ENCODE measurements at regions of chr16 and their contacts with region 1.

Region 1: GRCh38 chr16:29848420-29849297 is 14.4 kb downstream of the CDIPT start:
- DNase-seq: peak; percentile 87
- ATAC-seq: peak; percentile 95
- H3K4me3 Mint-ChIP-seq: no peak overlapping the region
- H3K27ac Mint-ChIP-seq: no peak overlapping the region
- H3K4me1 Mint-ChIP-seq: peaks cover 6% of the 10 kb centered on the region
- H3K27me3 Mint-ChIP-seq: no peaks in the 10 kb centered on the region

Region 2: DNA sequence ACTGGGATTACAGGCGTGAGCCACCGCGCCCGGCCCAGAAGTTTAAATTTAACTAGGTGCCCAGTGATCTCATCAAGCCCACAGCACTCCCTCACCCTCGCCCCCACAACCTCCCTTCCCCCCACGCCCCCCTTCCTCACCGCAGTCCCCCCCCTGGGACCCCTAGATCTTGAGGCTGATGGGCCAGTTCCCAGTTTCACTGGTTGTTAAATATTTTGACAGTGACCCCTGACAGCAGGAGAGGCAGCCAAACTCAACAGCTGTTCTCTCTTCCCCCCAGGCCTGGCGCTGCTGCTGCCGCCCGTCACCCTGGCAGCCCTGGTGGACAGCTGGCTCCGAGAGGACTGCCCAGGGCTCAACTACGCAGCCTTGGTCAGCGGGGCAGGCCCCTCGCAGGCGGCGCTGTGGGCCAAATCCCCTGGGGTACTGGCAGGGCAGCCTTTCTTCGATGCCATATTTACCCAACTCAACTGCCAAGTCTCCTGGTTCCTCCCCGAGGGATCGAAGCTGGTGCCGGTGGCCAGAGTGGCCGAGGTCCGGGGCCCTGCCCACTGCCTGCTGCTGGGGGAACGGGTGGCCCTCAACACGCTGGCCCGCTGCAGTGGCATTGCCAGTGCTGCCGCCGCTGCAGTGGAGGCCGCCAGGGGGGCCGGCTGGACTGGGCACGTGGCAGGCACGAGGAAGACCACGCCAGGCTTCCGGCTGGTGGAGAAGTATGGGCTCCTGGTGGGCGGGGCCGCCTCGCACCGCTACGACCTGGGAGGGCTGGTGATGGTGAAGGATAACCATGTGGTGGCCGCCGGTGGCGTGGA is 154.1 kb before region 1 on chr16:
- CTCF ChIA-PET with region 1: interaction called, 93 read pairs
- POLR2A ChIA-PET with region 1: no interaction called
- DNase-seq: no peak
- ATAC-seq: no peak
- H3K4me3 Mint-ChIP-seq: no peak overlapping the region
- H3K27ac Mint-ChIP-seq: no peak overlapping the region
- H3K4me1 Mint-ChIP-seq: peaks cover 14% of the 10 kb centered on the region
- H3K27me3 Mint-ChIP-seq: no peaks in the 10 kb centered on the region

Region 3: GRCh38 chr16:29805378-29806098 is 43.1 kb before region 1 on chr16:
- CTCF ChIA-PET with region 1: interaction called, 62 read pairs
- POLR2A ChIA-PET with region 1: interaction called, 9 read pairs
- DNase-seq: peak; percentile 99
- ATAC-seq: peak; percentile 72
- H3K4me3 Mint-ChIP-seq: peak overlapping the region; percentile 89
- H3K27ac Mint-ChIP-seq: peak overlapping the region; percentile 93
- H3K4me1 Mint-ChIP-seq: peaks cover 49% of the 10 kb centered on the region
- H3K27me3 Mint-ChIP-seq: no peaks in the 10 kb centered on the region

Region 4: DNA sequence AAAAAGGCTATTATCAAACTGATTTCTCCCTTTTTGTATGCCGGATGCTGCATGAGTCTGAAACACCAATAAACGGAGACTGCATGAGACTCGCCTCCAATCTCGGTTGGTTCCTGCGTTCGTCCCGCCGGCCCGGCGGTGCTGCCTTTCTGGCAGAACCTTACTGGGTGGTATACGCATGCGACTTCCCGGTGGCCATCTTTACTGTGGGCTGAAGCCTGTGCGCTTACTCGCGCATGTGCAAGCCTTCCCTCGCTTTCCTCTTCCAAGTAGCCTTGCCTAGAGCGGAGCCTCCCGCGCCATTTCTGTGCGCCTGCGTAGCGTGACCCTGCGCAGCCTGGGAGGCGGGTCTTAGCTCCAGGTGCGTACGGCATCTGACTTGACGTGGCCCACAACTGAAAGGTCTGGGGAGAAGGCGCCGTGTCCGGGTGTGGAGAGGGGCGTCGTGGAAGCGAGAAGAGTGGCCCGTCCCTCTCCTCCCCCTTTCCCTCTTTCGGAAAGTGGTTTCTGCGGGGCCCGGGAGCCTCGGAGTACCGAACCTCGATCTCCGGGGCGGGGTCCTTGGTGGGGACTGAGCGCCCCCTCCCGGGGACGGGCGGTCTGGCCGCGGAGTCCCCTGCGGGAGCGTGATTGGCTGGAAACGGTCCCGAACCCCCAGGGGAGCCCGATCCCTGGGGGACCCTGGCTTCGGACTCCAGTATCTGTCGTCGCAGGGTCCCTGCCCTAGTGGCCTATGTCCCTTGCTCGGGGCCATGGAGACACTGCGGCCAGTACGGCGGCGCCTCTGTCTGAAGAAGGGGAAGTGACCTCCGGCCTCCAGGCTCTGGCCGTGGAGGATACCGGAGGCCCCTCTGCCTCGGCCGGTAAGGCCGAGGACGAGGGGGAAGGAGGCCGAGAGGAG is 32.6 kb before region 1 on chr16 and contains the start of gene PAGR1:
- CTCF ChIA-PET with region 1: interaction called, 106 read pairs
- POLR2A ChIA-PET with region 1: interaction called, 12 read pairs
- DNase-seq: peak; percentile 99
- ATAC-seq: peak; percentile 76
- H3K4me3 Mint-ChIP-seq: peak within 1 kb of the TSS; percentile 98
- H3K27ac Mint-ChIP-seq: peak within 1 kb of the TSS; percentile 92
- H3K4me1 Mint-ChIP-seq: peaks cover 70% of the 10 kb centered on the region
- H3K27me3 Mint-ChIP-seq: peaks cover 8% of the 10 kb centered on the region
- total RNA-seq, gene PAGR1: 39.1 TPM

Region 5: GRCh38 chr16:29825145-29826044 is 23.3 kb before region 1 on chr16:
- CTCF ChIA-PET with region 1: interaction called, 106 read pairs
- POLR2A ChIA-PET with region 1: interaction called, 12 read pairs
- DNase-seq: peak; percentile 62
- ATAC-seq: peak; percentile 35
- H3K4me3 Mint-ChIP-seq: peak overlapping the region; percentile 13
- H3K27ac Mint-ChIP-seq: peak overlapping the region; percentile 74
- H3K4me1 Mint-ChIP-seq: peaks cover 62% of the 10 kb centered on the region
- H3K27me3 Mint-ChIP-seq: no peaks in the 10 kb centered on the region

Region 6: DNA sequence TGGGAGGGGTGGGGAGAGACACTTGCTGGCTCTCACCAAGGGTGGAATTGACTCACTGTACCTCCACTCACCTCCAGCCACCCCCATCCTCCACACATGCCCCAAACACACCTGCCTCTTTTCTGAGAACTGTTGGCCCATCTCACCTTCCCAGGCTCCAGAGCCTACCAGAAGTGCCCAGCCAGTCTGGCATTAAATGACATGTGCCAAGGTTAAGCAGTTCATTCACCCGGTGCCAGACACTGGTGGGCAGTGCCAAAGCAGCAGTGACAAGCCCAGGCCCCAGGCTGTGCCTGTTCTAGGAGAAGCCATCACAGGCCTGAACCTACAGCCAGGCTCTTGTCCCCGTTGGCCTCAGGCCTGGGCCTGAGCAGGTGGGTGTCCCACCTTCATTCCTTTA is 17.2 kb before region 1 on chr16:
- CTCF ChIA-PET with region 1: interaction called, 53 read pairs
- POLR2A ChIA-PET with region 1: no interaction called
- DNase-seq: no peak
- ATAC-seq: no peak
- H3K4me3 Mint-ChIP-seq: no peak overlapping the region
- H3K27ac Mint-ChIP-seq: no peak overlapping the region
- H3K4me1 Mint-ChIP-seq: peaks cover 12% of the 10 kb centered on the region
- H3K27me3 Mint-ChIP-seq: no peaks in the 10 kb centered on the region

Measured in activated CD8-positive, alpha-beta T cell treated with anti-CD3 and anti-CD28 coated beads, Interleukin-2, amount 10 ng/mL, durations not matched to agents 7 days and 5 days (primary cell).